ENCODE measurements at regions of chr15 and their contacts with region 1.

Region 1: DNA sequence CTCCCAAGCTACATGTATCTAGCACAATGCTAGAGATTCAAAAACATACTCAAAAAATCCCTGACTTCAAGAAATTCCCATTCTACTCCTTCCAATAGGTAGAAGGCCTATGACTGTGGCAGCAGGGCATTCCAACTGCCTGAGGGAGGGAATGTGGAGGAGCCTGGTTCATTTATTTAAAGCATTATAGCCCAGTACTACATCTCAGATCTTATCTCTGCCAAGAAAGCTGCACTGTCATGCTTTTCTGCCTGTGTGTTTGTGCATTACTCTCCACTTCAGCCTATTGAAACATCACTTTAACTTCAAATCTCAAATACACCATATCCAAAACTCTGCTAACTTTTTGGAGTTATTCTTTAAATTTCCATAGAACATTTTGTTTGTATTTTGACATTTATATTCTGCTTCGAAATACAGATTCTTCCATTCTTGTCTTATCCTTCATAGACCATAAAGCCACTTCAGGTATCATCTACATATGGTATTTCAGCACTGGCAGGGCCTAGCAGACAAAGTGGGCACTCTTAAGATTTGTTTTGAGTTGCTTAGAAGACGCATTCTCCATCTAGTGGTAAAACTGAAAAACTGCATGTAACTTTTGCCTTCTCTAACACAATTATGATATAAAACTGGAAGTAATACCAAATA is 59.1 kb upstream of the NEDD4 start:
- DNase-seq: no peak
- ATAC-seq: peak; percentile 74
- H3K4me3 ChIP-seq: no peak overlapping the region
- H3K27ac ChIP-seq: no peak overlapping the region
- H3K4me1 ChIP-seq: no peaks in the 10 kb centered on the region
- H3K27me3 ChIP-seq: no peaks in the 10 kb centered on the region

Region 2: DNA sequence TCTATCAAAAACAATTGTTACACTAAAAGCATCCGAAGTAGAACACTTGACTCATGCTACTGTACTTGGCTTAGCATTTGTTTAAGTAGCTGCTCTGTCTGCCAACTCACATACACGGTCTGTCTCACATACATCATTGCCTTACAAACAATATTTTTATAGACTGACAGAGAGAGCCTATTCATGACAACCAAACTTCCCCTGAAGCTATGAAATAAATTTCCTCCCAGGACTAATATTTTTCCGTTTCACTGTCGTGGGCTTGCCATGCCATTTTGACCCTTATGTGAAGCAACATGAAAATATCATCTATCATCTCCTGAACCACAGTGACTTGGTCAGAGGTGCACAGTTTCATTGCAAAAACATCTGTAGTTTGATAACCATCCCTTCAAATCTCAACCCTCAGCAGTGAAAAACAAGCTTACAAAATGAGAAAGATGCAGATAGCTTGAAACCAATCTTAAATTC is 397.9 kb before region 1 on chr15:
- intact Hi-C with region 1: loop called (anchors 10 kb)
- DNase-seq: no peak
- ATAC-seq: no peak
- H3K4me3 ChIP-seq: no peak overlapping the region
- H3K27ac ChIP-seq: no peak overlapping the region
- H3K4me1 ChIP-seq: no peaks in the 10 kb centered on the region
- H3K27me3 ChIP-seq: no peaks in the 10 kb centered on the region

Region 3: GRCh38 chr15:55928955-55929354 is 123.6 kb before region 1 on chr15:
- intact Hi-C with region 1: loop called in 1 of 2 experiments (anchors 10 kb)
- DNase-seq: no peak
- ATAC-seq: no peak
- H3K4me3 ChIP-seq: no peak overlapping the region
- H3K27ac ChIP-seq: no peak overlapping the region
- H3K4me1 ChIP-seq: no peaks in the 10 kb centered on the region
- H3K27me3 ChIP-seq: no peaks in the 10 kb centered on the region

Region 4: DNA sequence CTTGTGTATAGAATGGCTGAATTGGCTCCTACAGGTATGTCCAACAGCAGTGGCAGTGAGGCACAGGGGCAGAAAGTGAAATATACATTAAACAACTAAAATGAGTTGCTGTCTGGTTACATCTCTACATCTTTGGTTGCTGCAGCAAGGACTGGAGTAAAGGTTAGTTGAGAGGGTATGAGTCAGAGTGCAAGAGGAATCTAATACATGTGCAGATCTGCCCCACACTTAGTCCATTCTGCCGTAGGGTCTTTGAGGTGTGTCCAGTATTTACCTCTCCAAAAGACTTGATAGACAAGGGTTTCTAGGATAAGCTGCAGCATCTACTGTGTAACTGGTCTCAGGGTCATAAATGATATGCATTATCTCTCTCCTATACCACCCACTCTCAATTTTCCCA is 52.9 kb before region 1 on chr15:
- intact Hi-C with region 1: loop called in 1 of 2 experiments (anchors 5 kb)
- DNase-seq: no peak
- ATAC-seq: no peak
- H3K4me3 ChIP-seq: no peak overlapping the region
- H3K27ac ChIP-seq: no peak overlapping the region
- H3K4me1 ChIP-seq: no peaks in the 10 kb centered on the region
- H3K27me3 ChIP-seq: no peaks in the 10 kb centered on the region